ENCODE measurements at regions of chr2 and their contacts with region 1.

Region 1: GRCh38 chr2:33312355-33312754 is 164.1 kb upstream of the RASGRP3 start:
- DNase-seq: no peak
- H3K4me3 ChIP-seq: no peak overlapping the region
- H3K27ac ChIP-seq: no peak overlapping the region
- H3K4me1 ChIP-seq: peaks cover 5% of the 10 kb centered on the region
- H3K27me3 ChIP-seq: no peaks in the 10 kb centered on the region
- CTCF ChIP-seq: no peak

Region 2: GRCh38 chr2:33267756-33268155 is 44.6 kb before region 1 on chr2:
- CTCF ChIA-PET with region 1: no interaction called
- POLR2A ChIA-PET with region 1: no interaction called
- intact Hi-C with region 1: loop called (anchors 1 kb)
- DNase-seq: peak; percentile 23
- H3K4me3 ChIP-seq: no peak overlapping the region
- H3K27ac ChIP-seq: no peak overlapping the region
- H3K4me1 ChIP-seq: no peaks in the 10 kb centered on the region
- H3K27me3 ChIP-seq: no peaks in the 10 kb centered on the region
- CTCF ChIP-seq: no peak

Region 3: DNA sequence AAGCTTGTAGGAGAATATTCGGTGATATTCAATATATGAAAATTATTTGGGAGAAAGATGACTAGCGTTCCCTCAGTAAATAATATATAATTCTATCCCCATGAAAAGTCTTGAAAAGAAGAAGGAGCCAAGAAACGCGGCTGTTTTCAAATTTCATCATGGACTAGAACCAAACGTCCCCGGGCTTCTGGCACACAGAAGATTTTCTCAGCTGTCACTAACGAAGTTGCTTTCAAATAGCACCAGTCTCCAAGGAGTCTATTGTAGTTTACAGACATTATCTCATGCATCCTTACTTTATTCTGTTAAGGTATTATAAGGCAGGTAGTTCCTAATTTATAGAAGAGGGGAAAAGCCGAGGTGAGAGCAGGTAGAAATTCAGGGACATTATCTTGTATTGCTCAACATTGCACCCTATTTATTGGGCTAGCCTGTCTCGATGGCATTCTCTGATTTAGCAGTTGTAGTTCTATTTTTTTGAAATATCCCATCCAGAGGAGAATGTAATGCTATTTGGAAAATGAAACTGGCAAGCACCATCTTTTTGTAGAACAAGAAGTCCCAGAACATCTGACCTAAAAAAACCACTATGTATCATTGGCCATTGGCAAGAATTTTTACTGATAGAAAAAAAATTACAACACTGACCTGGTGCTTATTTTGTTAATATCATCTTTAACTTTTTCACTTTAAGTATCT is 34.0 kb before region 1 on chr2:
- CTCF ChIA-PET with region 1: no interaction called
- POLR2A ChIA-PET with region 1: no interaction called
- intact Hi-C with region 1: no loop called
- DNase-seq: no peak
- H3K4me3 ChIP-seq: no peak overlapping the region
- H3K27ac ChIP-seq: no peak overlapping the region
- H3K4me1 ChIP-seq: no peaks in the 10 kb centered on the region
- H3K27me3 ChIP-seq: no peaks in the 10 kb centered on the region
- CTCF ChIP-seq: no peak

Region 4: GRCh38 chr2:33342171-33342570 is 29.8 kb after region 1 on chr2:
- CTCF ChIA-PET with region 1: no interaction called
- POLR2A ChIA-PET with region 1: no interaction called
- intact Hi-C with region 1: no loop called
- DNase-seq: no peak
- H3K4me3 ChIP-seq: no peak overlapping the region
- H3K27ac ChIP-seq: no peak overlapping the region
- H3K4me1 ChIP-seq: no peaks in the 10 kb centered on the region
- H3K27me3 ChIP-seq: no peaks in the 10 kb centered on the region
- CTCF ChIP-seq: no peak

Region 5: GRCh38 chr2:34337734-34338133 is 1025.4 kb after region 1 on chr2:
- CTCF ChIA-PET with region 1: no interaction called
- POLR2A ChIA-PET with region 1: no interaction called
- intact Hi-C with region 1: no loop called
- DNase-seq: no peak
- H3K4me3 ChIP-seq: no peak overlapping the region
- H3K27ac ChIP-seq: no peak overlapping the region
- H3K4me1 ChIP-seq: no peaks in the 10 kb centered on the region
- H3K27me3 ChIP-seq: no peaks in the 10 kb centered on the region
- CTCF ChIP-seq: no peak